ENCODE measurements at regions of chr22 and their contacts with region 1.

Region 1: DNA sequence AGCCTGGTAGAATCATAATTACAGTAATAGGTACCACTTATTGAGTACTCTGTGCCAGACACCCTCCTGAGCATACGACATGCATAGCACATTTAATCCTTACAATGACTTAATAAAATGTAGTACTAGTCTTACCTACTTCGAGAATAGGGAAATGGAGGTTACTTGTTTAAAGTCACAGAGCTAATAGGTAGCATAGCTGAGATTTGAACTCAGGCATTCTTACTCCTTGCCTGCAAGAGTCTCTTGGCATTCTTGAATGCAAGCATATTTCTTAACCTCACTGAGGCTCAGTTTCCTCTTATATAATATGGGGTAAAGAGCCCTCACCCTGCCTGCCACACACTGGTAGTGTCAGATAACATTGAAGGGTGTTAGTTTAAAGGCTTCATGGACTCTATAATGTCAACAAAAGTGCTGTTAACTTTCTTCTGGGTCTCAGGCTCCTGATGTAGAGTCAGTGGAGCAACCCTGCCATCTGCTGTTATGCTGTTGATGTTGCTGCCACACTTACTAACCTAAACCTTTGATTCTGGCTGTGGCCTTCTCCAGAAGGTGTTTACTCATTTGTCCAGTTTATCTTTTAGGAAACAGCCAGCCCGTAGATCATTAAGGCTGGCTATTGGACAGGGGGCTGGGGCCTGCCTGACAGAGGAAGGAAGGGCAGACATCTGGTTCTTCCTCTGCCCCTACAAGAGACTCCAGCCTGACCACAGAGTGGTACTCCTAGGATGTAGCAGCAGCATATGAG is 18.9 kb downstream of the LIMK2 start:
- DNase-seq: no peak
- H3K4me3 ChIP-seq: no peak overlapping the region
- H3K27ac ChIP-seq: no peak overlapping the region
- H3K4me1 ChIP-seq: peaks cover 0 to 5% (median 2%) of the 10 kb centered on the region in 4 experiments; a peak in 3 of 7 replicates
- H3K27me3 ChIP-seq: no peaks in the 10 kb centered on the region
- CTCF ChIP-seq: peak in 2 of 3 experiments; percentile 33 to 43; a peak in 3 of 4 replicates
- EP300 ChIP-seq: no peak
- POLR2A ChIP-seq: no peak
- RAD21 ChIP-seq: peak; percentile 54 to 62

Region 2: DNA sequence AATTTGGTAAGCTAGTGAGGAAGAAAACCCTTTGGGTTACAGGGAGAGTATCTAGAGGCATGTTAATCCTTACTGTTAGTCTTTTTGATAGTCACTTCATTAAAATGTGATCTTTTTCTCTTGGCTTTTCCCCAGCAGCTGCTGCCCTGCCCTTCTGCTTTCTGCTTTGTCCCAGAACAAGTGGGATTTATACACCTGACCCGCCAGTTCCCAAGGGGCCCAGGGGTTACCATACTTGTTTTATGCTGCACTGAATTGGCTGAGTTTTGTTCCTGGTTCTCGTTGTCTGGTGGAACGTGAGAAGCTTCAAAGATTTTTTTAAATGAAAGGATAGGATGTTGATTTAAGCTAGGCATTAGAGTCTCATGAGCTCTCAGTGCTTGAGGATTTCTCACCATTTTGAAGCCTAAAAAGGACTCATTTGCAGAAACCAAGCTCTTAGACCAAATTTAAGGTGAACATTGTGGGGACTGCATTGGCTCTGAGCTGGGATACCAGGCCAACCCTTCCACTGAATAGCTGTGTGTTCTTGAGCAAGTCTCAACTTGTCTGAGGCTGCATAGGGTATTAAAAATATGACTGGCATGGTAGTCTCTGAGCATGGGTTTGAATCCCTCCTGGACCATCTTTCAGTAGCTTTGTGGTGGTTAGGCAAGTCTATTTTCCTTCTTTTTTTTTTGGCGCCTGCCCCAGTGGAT is 12.3 kb before region 1 on chr22:
- CTCF ChIA-PET with region 1: interaction called, 77 read pairs
- POLR2A ChIA-PET with region 1: interaction called, 20 read pairs
- DNase-seq: no peak
- H3K4me3 ChIP-seq: no peak overlapping the region
- H3K27ac ChIP-seq: no peak overlapping the region
- H3K4me1 ChIP-seq: no peaks in the 10 kb centered on the region; a peak in 2 of 7 replicates
- H3K27me3 ChIP-seq: no peaks in the 10 kb centered on the region
- CTCF ChIP-seq: no peak
- EP300 ChIP-seq: no peak
- POLR2A ChIP-seq: no peak
- RAD21 ChIP-seq: no peak

Region 3: GRCh38 chr22:31241200-31241599 is 10.2 kb after region 1 on chr22:
- CTCF ChIA-PET with region 1: interaction called, 28 read pairs
- POLR2A ChIA-PET with region 1: interaction called, 9 read pairs
- DNase-seq: no peak
- H3K4me3 ChIP-seq: no peak overlapping the region
- H3K27ac ChIP-seq: no peak overlapping the region
- H3K4me1 ChIP-seq: peaks cover 4 to 21% (median 6%) of the 10 kb centered on the region in 4 experiments; a peak in 4 of 7 replicates
- H3K27me3 ChIP-seq: no peaks in the 10 kb centered on the region
- CTCF ChIP-seq: no peak
- EP300 ChIP-seq: no peak
- POLR2A ChIP-seq: no peak
- RAD21 ChIP-seq: no peak

Region 4: DNA sequence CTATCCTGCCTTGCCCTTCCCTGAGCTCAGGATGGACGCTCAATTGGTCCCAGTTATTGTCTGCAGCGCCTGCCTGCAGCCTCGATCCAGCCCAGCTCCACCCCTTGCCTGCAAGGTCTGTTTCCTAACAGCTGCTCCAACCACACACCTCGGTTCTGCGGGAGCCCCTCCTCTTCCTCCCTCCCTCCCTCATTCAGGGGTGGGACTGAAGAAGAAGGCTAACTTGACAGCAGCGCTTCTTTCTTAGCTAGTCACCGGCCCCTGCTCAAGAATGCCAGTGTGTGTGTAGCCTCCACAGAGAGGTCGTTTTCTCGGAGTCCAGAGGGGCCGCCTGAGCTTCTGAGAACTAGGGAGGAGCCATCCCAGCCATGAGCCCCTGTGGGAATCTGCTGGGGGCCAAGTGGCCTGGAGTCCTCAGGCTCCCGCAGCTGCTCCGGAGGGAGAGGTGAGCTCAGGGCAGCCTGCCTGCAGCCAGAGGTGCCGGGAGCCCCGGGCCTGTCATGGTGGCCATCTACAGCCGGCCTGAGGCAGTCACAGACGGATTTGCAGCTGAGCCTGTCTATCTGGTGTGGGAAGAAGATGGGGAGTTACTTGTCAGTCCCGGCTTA is 17.2 kb after region 1 on chr22:
- CTCF ChIA-PET with region 1: interaction called, 28 read pairs
- POLR2A ChIA-PET with region 1: interaction called, 7 read pairs
- DNase-seq: peak; percentile 67 to 68
- H3K4me3 ChIP-seq: 0 out of 8 replicates have a peak overlapping the region, but pooled peaks of 1 of the 4 experiments have one; percentile 13
- H3K27ac ChIP-seq: no peak overlapping the region
- H3K4me1 ChIP-seq: peaks cover 8 to 13% (median 12%) of the 10 kb centered on the region in 4 experiments
- H3K27me3 ChIP-seq: no peaks in the 10 kb centered on the region
- CTCF ChIP-seq: no peak
- EP300 ChIP-seq: no peak
- POLR2A ChIP-seq: no peak
- RAD21 ChIP-seq: no peak